OCI-LY7 (cell line): ENCODE measurements at regions of chr22 and their contacts with region 1.

Region 1: GRCh38 chr22:46035742-46036557 is 59.0 kb upstream of the WNT7B start:
- DNase-seq: peak; percentile 99
- H3K4me3 ChIP-seq: peak overlapping the region; percentile 97
- H3K27ac ChIP-seq: peak overlapping the region; percentile 65
- H3K4me1 ChIP-seq: peaks cover 21% of the 10 kb centered on the region
- CTCF ChIP-seq: no peak

Region 2: GRCh38 chr22:45693835-45694234 is 342.1 kb before region 1 on chr22:
- CTCF ChIA-PET with region 1: interaction called, 12 read pairs
- POLR2A ChIA-PET with region 1: no interaction called
- intact Hi-C with region 1: no loop called
- DNase-seq: no peak
- H3K4me3 ChIP-seq: no peak overlapping the region
- H3K27ac ChIP-seq: no peak overlapping the region
- H3K4me1 ChIP-seq: peaks cover 10% of the 10 kb centered on the region
- CTCF ChIP-seq: no peak

Region 3: DNA sequence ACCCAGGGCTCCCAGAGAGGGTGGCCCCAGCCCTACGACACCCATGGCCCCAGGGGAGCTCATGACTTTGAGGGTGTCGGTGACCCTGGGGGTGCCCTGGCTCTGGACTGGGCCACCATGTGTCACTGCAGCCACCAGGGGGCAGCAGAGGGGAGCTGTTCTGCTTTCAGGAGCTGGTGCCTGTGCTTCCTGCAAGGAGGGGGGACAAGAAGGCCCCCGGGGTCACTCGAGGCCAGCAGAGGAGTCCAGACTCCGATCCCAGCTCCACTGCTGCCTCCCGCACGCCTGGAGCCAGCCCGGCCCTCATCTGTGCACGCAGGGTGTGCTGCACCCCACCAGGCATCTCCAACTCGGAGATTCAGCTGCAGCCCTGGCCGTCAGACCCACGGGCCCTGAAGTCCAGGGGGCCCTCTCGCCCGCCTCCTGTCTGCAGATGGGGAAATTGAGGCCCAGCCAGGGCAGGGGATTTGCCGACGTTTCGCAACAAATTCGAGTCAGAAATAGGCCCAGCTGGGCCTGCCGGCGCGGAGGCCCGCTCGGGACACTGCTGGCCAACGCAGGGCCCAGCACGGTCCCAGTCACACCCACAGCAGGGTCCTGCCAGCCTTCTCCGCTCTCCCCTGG is 29.5 kb before region 1 on chr22:
- CTCF ChIA-PET with region 1: interaction called, 11 read pairs
- POLR2A ChIA-PET with region 1: interaction called, 3 read pairs
- intact Hi-C with region 1: loop called (anchors 1 kb)
- DNase-seq: peak; percentile 83
- H3K4me3 ChIP-seq: no peak overlapping the region
- H3K27ac ChIP-seq: no peak overlapping the region
- H3K4me1 ChIP-seq: peaks cover 13% of the 10 kb centered on the region
- CTCF ChIP-seq: peak; percentile 94

Region 4: GRCh38 chr22:46013460-46014416 is 22.2 kb before region 1 on chr22:
- CTCF ChIA-PET with region 1: interaction called, 3 read pairs
- POLR2A ChIA-PET with region 1: interaction called, 5 read pairs
- intact Hi-C with region 1: loop called (anchors 1 kb)
- DNase-seq: peak; percentile 85
- H3K4me3 ChIP-seq: peak overlapping the region; percentile 68
- H3K27ac ChIP-seq: no peak overlapping the region
- H3K4me1 ChIP-seq: peaks cover 14% of the 10 kb centered on the region
- CTCF ChIP-seq: peak; percentile 84

Region 5: DNA sequence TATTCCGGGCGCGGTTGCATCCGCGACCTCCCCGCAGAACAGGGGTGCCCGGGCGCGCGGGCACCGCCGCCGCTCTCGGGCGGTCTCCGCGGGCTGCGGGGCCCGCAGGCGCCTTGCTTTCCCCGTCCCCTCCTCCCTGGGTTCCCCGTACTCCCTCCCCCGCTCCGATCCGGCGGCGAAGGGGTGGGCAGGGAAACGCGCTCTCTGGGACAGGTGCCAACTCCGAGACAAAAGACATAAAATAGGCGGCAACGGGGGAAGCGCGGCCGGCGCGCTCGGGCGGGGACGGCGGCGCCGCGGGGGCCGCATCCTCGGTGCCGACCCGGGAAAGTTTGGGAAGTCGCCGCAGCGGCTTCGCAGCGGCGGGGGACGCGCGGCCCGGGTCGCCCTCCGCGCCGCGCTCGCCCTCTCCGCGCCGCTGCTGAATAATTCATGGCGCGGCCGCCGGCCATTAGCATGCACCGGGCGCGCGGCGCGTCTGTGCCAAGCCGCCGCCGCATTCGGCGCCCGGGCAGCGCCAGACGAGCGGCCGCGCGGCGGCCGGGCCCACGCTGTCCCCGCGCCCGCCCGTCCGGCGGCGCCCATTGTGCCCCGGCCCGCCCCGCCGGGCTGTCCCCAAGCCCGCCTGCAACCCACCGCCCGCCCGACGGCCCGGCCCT is 35.6 kb after region 1 on chr22:
- CTCF ChIA-PET with region 1: no interaction called
- POLR2A ChIA-PET with region 1: no interaction called
- intact Hi-C with region 1: loop called (anchors 2 kb)
- DNase-seq: peak; percentile 44
- H3K4me3 ChIP-seq: peak overlapping the region; percentile 66
- H3K27ac ChIP-seq: no peak overlapping the region
- H3K4me1 ChIP-seq: peaks cover 38% of the 10 kb centered on the region
- CTCF ChIP-seq: no peak

Region 6: DNA sequence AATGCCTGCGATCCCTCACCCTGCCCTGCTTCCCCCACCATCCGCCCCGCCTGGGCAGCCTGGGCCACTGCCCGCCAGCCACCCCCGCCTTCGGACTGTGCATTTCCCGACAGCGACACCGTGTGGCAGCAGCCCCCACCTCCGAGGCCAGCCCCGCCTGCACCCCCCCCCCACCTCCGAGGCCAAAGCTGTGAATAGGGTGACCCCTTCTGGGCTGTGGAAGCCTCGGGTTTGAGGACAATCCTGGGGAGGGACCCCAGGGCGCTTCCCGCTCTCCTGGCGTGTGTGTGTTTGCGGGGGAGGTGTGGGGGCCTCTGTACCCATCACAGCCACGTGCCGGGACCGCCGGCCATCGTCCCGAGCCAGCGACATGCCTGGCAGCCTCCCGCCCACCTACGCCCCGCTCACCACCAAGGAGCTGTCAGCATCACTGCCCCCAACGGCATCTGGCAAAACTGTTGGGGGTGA is 80.6 kb after region 1 on chr22:
- CTCF ChIA-PET with region 1: interaction called, 3 read pairs
- POLR2A ChIA-PET with region 1: no interaction called
- intact Hi-C with region 1: loop called (anchors 1 kb)
- DNase-seq: peak; percentile 89
- H3K4me3 ChIP-seq: no peak overlapping the region
- H3K27ac ChIP-seq: no peak overlapping the region
- H3K4me1 ChIP-seq: peaks cover 6% of the 10 kb centered on the region
- CTCF ChIP-seq: peak; percentile 98

Region 7: DNA sequence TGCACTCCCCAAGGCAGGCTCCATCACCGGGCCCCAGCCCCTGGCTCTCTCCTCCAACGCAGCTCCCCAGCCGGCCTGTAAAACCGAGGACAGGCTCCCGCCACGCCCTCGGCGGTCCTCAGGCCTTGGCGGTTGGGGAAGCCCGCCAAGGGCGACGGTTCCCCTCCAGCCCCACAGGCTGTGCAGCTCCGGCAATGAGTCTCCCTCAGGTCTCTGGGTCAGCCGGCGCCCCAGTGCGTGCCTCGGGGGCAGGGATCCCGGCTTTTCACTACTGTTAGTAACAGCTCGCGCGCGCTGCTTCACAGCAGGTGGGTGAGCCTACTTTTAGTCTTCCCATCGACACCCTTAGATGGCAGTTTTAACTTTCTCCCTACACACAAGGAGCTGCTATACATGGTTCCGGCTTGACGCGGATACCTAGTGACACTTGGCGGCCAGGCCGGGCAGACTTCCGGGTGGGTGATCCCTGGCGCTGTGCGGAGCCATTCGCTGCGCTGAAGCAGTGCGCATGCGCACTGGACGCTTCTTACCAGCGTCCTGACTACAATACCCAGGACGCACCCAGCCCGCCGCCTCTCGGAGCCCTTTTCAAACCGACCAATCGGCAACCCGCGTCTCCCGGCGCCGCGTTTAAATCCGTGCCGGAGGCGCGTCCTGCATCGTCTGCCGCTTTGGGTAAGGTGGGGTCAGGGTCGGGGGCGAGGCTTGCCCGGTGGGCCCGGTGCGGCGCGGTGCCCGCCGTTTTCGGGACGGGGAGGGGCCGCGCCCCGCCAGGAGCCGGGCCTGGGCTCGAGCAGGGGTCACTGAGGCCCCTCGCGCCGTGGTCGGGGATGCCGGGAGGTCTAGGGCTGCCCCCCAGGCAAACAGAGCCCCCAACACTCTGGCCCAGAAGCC is 260.6 kb after region 1 on chr22 and contains the start of gene GTSE1:
- CTCF ChIA-PET with region 1: no interaction called
- POLR2A ChIA-PET with region 1: no interaction called
- intact Hi-C with region 1: loop called (anchors 10 kb)
- DNase-seq: peak; percentile 99
- H3K4me3 ChIP-seq: peak within 1 kb of the TSS; percentile 95
- H3K27ac ChIP-seq: peak within 1 kb of the TSS; percentile 87
- H3K4me1 ChIP-seq: peaks cover 49% of the 10 kb centered on the region
- CTCF ChIP-seq: peak; percentile 38; the same call in 1 of the 2 replicates
- total RNA-seq, gene GTSE1: 54.7 and 56.0 TPM in 2 replicates

Region 8: DNA sequence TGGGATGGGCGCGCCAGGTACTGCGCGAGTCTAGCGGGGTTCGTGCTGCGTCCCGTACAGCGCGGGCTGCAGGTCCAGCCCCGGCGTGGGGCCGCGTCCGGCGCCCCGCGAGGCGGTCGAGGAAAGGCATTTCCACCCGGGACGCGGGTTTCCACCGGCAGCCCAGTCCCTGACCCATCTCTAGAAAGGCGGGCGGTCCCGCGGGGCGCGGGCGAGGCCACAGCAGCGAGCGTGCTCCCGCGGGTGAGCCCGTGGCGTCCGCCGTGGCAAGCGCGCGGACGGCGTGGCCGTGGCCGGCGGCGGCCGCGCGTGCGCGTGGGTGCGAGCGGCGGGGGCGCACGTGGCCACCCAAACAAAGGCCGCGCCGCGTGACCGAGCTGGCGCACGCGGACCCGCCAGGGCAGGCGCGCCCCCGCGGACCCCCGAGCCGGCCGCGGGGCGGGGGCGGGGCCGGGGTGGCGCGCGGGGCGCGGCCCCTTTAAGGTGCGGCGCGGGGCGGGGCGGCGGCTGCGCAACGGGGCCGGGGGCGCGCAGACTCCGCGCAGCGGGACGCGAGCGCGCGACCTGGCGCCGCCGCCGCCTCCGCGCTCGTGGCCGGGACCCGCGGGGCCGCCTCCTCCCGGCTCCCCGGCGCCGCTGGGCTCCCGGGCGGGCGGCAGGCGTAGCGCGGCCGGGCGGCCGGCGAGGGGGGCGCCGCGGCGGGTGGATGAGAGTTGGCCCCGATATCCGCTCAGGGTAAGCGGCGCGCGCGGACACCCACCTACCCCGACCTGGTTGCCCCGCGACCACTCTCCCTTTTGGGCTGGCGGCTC is 540.8 kb after region 1 on chr22:
- CTCF ChIA-PET with region 1: no interaction called
- POLR2A ChIA-PET with region 1: no interaction called
- intact Hi-C with region 1: no loop called
- DNase-seq: peak; percentile 69
- H3K4me3 ChIP-seq: peak overlapping the region; percentile 66
- H3K27ac ChIP-seq: no peak overlapping the region
- H3K4me1 ChIP-seq: peaks cover 29% of the 10 kb centered on the region
- CTCF ChIP-seq: no peak